ENCODE measurements at regions of chr3 and their contacts with region 1.

Region 1: GRCh38 chr3:108589146-108589997 is at the starts of genes CIP2A and DZIP3:
- DNase-seq: peak; percentile 84
- H3K4me3 Mint-ChIP-seq: peak within 1 kb of the TSS; percentile 95
- H3K27ac Mint-ChIP-seq: peak within 1 kb of the TSS; percentile 99
- H3K4me1 Mint-ChIP-seq: peaks cover 36% of the 10 kb centered on the region
- H3K27me3 Mint-ChIP-seq: no peaks in the 10 kb centered on the region
- total RNA-seq, gene CIP2A: 34.7 to 39.9 TPM
- total RNA-seq, gene DZIP3: 11.2 to 12.2 TPM

Region 2: DNA sequence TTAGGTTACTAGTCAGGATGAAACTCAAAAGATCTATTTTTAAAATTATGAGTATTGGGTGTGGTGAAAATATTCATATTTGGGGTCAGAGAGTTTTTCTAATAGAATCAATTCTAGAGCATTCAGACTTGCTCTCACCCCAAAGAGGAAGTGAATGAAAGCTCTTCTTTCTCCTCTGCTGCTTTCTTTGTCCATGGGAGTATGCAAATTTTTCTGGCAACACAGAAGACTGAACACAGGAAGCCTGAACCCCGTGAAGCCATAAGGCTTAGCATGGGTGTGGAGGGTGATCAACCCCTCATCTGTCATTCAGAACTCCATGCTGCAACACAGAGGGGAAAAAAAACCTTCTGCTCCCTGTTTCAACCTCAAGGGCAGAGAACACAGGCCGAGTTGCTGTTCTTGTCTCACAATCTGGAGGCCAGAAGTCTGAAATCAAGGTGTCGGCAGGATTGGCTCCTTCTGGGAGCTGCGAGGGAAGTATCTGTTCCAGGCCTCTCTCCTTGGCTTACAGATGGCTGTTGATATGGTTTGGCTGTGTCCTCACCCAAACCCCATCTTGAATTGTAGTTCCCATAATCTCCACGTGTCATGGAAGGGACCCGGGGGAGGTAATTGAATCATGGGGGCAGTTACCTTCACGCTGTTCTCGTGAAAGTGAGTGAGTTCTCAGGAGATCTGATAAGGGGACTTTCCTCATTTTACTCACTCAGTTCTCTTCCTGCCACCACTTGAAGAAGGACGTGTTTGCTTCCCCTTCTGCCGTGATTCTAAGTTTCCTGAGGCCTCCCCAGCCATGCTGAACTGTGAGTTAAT is 464.8 kb before region 1 on chr3:
- CTCF ChIA-PET with region 1: no interaction called
- intact Hi-C with region 1: loop called (anchors 2 kb)
- DNase-seq: peak; percentile 84
- H3K4me3 Mint-ChIP-seq: peak overlapping the region; percentile 90
- H3K27ac Mint-ChIP-seq: peak overlapping the region; percentile 100
- H3K4me1 Mint-ChIP-seq: peaks cover 56% of the 10 kb centered on the region
- H3K27me3 Mint-ChIP-seq: no peaks in the 10 kb centered on the region

Region 3: GRCh38 chr3:108489771-108490170 is 99.6 kb before region 1 on chr3:
- CTCF ChIA-PET with region 1: no interaction called
- intact Hi-C with region 1: no loop called
- DNase-seq: peak; percentile 53
- H3K4me3 Mint-ChIP-seq: no peak overlapping the region
- H3K27ac Mint-ChIP-seq: no peak overlapping the region
- H3K4me1 Mint-ChIP-seq: peaks cover 2% of the 10 kb centered on the region
- H3K27me3 Mint-ChIP-seq: no peaks in the 10 kb centered on the region

Region 4: GRCh38 chr3:108578064-108578463 is 11.3 kb before region 1 on chr3:
- CTCF ChIA-PET with region 1: no interaction called
- intact Hi-C with region 1: loop called (anchors 1 kb)
- DNase-seq: no peak
- H3K4me3 Mint-ChIP-seq: no peak overlapping the region
- H3K27ac Mint-ChIP-seq: no peak overlapping the region
- H3K4me1 Mint-ChIP-seq: peaks cover 6% of the 10 kb centered on the region
- H3K27me3 Mint-ChIP-seq: no peaks in the 10 kb centered on the region

Region 5: DNA sequence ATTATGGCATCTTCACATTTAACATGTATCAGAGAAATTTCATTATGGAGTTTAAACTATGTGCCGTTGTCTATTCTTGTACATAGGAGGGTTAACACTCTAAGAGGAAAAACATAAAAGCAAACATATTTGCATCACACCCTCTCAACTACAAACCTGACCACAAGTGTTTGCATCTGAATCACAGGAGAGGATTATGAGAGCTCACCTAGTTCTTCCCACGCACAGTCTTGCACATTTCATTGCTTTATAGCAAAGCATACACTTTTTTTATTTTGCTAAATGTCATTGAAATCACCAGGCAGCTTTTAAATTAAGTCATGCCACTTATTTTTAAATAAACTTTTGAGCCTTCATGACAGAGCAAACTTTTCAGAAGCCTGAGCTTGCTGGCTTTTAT is 245.7 kb after region 1 on chr3:
- CTCF ChIA-PET with region 1: no interaction called
- intact Hi-C with region 1: loop called (anchors 1 kb)
- DNase-seq: peak; percentile 66
- H3K4me3 Mint-ChIP-seq: peak overlapping the region; percentile 81
- H3K27ac Mint-ChIP-seq: peak overlapping the region; percentile 93
- H3K4me1 Mint-ChIP-seq: peaks cover 77% of the 10 kb centered on the region
- H3K27me3 Mint-ChIP-seq: no peaks in the 10 kb centered on the region

Region 6: GRCh38 chr3:108897883-108898282 is 308.5 kb after region 1 on chr3:
- CTCF ChIA-PET with region 1: no interaction called
- intact Hi-C with region 1: loop called (anchors 5 kb)
- DNase-seq: no peak
- H3K4me3 Mint-ChIP-seq: no peak overlapping the region
- H3K27ac Mint-ChIP-seq: peak overlapping the region; percentile 36
- H3K4me1 Mint-ChIP-seq: peaks cover 23% of the 10 kb centered on the region
- H3K27me3 Mint-ChIP-seq: no peaks in the 10 kb centered on the region

Measured in activated naive CD4-positive, alpha-beta T cell treated with anti-CD3 and anti-CD28 coated beads for 36 hours (primary cell).